Posterior cingulate gyrus (tissue), 11 donors: ENCODE measurements at regions of chr12 and their contacts with region 1.

Region 1: GRCh38 chr12:100266835-100267618 is at the starts of genes DEPDC4 and SCYL2:
- DNase-seq: peak; percentile 92 to 100 (median 98)

Region 2: GRCh38 chr12:100142851-100143559 is 124.0 kb before region 1 on chr12 and contains the start of gene BLTP3B:
- intact Hi-C with region 1: loop called (anchors 5 kb)
- DNase-seq: peak; percentile 84 to 98 (median 92)

Region 3: GRCh38 chr12:100200463-100201181 is 66.4 kb before region 1 on chr12 and contains the start of gene ACTR6:
- intact Hi-C with region 1: loop called (anchors 2 kb)
- DNase-seq: peak; percentile 86 to 99 (median 94)

Region 4: GRCh38 chr12:100293017-100293416 is 26.0 kb after region 1 on chr12:
- intact Hi-C with region 1: no loop called
- DNase-seq: no peak